RWPE1 (cell line): ENCODE measurements at regions of chr11 and their contacts with region 1.

Region 1: DNA sequence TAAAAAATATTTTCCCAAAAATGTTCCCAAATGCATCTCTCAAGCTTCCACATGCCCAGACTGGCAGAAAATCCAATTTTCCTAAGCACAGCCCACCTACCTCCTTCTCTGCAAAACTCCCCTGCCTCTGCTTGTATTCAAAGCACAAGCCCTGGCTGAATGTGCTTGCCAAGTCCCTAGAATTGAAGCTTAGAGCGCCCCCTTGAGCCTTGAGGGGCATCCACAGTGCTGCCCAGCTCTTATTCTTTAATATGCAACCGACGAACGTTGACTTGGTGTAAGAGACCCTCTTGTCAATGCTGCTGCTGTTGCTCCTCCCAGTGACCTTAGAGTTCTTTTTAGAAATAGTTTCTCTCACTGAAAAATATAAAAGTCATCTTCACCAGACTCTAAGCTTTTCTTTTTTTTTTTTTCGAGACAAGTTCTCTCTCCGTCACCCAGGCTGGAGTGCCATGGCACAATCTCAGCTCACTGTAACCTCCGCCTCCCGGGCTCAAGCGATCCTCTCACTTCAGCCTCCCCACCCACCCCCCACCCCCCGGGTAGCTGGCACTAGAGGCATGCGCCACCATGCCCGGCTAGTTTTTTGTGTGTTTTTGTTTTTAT is 63.5 kb upstream of the CAPRIN1 start:
- DNase-seq: peak; percentile 46
- H3K27ac ChIP-seq: no peak overlapping the region
- CTCF ChIP-seq: peak; percentile 83

Region 2: DNA sequence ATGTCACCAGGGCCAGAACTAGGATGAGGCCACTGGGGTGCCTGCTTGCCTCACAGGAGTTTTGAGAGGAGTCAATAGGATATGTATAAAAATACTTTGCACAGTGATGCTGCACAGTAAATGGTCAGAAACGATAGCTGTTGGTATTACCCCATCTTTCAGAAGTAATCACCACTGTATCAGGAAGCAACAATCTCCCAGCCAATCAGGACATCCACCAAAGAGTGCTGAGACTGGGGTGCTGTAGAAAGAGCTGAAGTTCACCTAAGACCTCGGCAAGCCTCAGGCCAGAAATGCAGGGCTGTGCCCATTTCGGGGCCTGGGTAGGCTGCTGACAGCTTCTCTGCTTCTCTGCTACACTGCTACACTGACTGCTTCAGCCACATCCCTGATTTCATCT is 113.6 kb before region 1 on chr11:
- CTCF ChIA-PET with region 1: no interaction called
- POLR2A ChIA-PET with region 1: no interaction called
- DNase-seq: no peak
- H3K27ac ChIP-seq: no peak overlapping the region
- CTCF ChIP-seq: no peak

Region 3: DNA sequence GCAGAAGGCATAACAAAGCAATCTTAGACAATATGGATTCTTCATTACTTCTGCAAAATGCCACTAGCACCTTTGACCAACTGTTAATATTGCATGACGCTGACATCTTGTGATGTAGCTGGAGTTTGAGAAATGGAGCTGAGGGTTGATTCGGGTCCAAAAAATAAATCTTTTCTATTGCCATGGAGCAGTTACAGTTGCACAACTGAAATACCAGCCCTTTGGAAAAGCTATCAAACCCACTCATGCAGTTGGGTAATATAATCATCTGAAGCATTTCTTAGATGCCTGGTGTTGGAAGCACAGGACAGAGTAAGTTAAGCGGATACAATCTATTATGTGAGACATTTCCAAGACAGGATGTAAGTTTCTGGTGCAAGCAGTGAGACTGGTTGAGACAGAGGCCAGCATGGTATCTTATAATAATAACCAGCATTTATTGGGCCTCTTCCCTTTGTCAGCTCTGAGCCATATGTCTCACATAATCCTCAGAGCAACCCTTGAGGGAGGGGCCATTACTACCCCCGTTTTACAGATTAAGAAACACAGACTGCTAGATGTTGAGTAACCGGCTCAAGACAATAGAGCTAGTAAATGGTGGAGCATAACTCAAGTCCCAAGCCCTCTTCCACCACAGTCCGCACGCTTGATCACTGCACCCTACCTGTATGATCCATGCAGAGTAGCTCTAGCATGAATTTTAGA is 11.4 kb before region 1 on chr11:
- CTCF ChIA-PET with region 1: interaction called, 13 read pairs
- POLR2A ChIA-PET with region 1: no interaction called
- DNase-seq: no peak
- H3K27ac ChIP-seq: no peak overlapping the region
- CTCF ChIP-seq: no peak

Region 4: DNA sequence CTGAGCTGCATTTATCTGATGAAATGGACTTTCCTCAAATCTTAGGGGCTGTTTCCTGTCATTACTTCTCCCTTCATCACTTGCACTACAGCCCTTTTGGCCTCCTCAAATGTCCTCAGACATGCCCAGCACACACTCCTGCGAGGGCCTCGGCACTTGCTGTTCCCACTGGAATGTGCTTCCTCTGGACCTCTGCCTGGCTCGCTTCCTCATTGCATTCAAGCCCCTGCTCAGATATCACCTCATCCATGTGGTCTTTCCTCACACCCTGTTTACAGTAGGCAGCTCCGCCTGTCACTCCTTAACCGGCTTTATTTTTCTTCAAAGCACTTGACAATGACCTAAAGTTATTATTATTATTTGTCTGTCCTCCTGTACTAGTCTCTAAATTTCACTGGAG is 126.4 kb after region 1 on chr11:
- CTCF ChIA-PET with region 1: no interaction called
- POLR2A ChIA-PET with region 1: no interaction called
- DNase-seq: no peak
- H3K27ac ChIP-seq: no peak overlapping the region
- CTCF ChIP-seq: no peak

Region 5: GRCh38 chr11:34783816-34784317 is 795.8 kb after region 1 on chr11:
- CTCF ChIA-PET with region 1: no interaction called
- POLR2A ChIA-PET with region 1: no interaction called
- DNase-seq: no peak
- H3K27ac ChIP-seq: no peak overlapping the region
- CTCF ChIP-seq: no peak